ENCODE measurements at regions of chr5 and their contacts with region 1.

Region 1: DNA sequence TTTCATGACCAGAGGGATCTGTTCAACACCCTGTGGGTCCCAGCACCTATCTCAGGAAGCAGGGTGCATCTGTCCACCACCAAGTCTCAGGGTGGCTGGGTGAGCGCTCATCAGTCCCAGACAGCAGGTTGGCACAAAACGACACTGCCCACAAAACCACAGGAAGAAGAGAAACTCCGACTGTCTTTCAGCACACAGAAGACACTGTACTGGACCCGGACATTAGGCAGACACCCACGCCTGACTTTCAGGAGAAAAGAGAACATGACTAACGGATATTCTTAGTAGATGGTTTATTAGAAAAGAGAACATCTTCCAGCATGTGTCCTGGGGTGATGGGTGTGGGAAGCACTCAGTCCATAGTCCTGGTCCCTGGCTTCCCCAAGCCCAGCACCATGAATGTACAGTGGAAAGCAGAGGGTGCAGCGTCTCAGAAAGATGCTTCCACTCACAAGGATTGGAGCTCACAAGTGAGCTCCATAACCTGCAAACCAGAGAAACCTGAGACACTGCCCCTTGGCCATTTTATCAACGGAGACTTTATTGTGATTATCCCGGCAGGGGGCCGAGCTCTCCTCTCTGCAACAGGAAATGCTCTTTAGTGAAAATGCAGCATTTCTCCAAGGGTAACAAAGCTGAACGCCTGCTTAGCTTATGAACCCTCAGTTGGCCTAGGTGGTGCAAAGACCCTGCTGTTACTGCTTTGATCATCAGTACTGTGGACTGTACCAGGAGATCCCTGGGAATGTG is 35.8 kb upstream of the LCP2 start:
- DNase-seq: peak; percentile 46
- ATAC-seq: peak; percentile 27
- H3K4me3 Mint-ChIP-seq: no peak overlapping the region
- H3K27ac Mint-ChIP-seq: no peak overlapping the region
- H3K4me1 Mint-ChIP-seq: peaks cover 56% of the 10 kb centered on the region
- H3K27me3 Mint-ChIP-seq: no peaks in the 10 kb centered on the region

Region 2: DNA sequence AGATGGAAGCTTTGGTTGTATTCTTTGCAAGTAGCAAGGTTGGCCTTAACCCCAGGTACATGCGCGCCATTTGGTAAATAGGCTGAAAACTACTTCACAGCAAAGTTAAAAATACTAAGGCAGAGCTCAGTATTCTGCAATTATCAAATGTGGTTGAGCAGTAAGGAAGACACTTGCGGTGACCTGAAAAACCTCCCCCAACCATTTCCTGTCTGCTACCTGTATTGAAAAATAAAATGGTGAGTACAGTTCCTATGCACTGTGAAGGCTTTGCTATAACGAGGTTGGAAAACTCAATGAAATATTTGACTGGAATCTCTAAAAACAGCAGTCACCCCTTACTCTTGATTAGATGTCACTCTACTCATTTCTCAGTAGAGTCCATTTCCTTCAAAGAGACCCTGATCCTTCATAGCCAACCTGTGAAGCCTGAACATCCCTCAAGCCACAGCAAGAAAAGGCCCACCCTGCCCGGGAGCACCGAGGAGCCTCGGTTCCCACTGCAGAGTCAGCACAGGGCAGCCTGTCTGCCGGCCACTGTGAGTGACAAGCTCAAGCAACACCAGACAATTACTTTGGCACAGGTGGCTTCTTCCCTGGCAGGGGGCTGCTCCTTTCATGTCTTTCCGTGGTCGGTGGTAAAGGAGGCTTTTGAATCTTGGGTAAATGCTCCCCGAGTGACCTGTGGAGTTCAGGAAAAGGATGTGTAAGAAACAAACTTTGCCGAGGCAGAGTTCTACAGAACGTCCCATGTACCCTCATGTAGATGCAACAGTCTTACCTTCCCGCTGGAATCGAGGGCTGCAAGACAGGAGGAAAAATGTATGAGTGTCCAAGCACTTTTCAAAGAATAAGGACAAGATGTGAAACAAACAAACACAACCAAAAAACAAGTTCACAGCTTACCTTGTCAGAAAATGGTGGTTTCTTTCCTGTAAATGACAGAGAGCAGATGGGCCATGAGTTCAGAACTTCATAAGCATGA is 71.0 kb before region 1 on chr5:
- POLR2A ChIA-PET with region 1: interaction called, 34 read pairs
- DNase-seq: peak; percentile 66
- ATAC-seq: peak; percentile 70
- H3K4me3 Mint-ChIP-seq: peak overlapping the region; percentile 78
- H3K27ac Mint-ChIP-seq: peak overlapping the region; percentile 88
- H3K4me1 Mint-ChIP-seq: peaks cover 87% of the 10 kb centered on the region
- H3K27me3 Mint-ChIP-seq: no peaks in the 10 kb centered on the region

Region 3: GRCh38 chr5:170278611-170279452 is 54.5 kb before region 1 on chr5:
- POLR2A ChIA-PET with region 1: interaction called, 32 read pairs
- DNase-seq: peak; percentile 87
- ATAC-seq: peak; percentile 76
- H3K4me3 Mint-ChIP-seq: peak overlapping the region; percentile 69
- H3K27ac Mint-ChIP-seq: peak overlapping the region; percentile 88
- H3K4me1 Mint-ChIP-seq: peaks cover 86% of the 10 kb centered on the region
- H3K27me3 Mint-ChIP-seq: no peaks in the 10 kb centered on the region

Region 4: GRCh38 chr5:170293273-170293672 is 40.1 kb before region 1 on chr5:
- POLR2A ChIA-PET with region 1: interaction called, 371 read pairs
- DNase-seq: peak; percentile 88
- ATAC-seq: peak; percentile 68
- H3K4me3 Mint-ChIP-seq: peak overlapping the region; percentile 99
- H3K27ac Mint-ChIP-seq: peak overlapping the region; percentile 97
- H3K4me1 Mint-ChIP-seq: peaks cover 60% of the 10 kb centered on the region
- H3K27me3 Mint-ChIP-seq: no peaks in the 10 kb centered on the region

Region 5: DNA sequence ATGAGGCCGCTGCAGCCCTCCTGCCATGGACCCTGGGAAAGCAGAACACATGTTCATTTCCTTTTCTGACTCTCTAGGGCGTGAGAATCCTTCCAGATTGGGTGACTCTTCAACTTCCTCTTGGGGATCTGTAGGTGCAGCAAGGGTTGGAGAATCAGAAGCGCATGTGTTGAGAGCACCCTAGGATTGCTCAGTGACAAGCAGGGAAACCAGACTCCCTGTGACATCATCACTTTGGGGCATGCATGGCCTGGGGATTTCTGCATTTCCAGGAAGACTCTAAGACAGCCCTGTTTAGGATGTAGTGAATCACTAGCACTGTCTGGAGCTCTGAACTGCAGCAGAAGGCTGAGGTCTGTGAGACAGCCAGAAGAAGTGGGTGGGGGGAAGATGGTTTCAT is 20.7 kb before region 1 on chr5:
- POLR2A ChIA-PET with region 1: interaction called, 21 read pairs
- DNase-seq: no peak
- ATAC-seq: peak; percentile 69
- H3K4me3 Mint-ChIP-seq: peak overlapping the region; percentile 51
- H3K27ac Mint-ChIP-seq: peak overlapping the region; percentile 78
- H3K4me1 Mint-ChIP-seq: peaks cover 38% of the 10 kb centered on the region
- H3K27me3 Mint-ChIP-seq: no peaks in the 10 kb centered on the region

Region 6: DNA sequence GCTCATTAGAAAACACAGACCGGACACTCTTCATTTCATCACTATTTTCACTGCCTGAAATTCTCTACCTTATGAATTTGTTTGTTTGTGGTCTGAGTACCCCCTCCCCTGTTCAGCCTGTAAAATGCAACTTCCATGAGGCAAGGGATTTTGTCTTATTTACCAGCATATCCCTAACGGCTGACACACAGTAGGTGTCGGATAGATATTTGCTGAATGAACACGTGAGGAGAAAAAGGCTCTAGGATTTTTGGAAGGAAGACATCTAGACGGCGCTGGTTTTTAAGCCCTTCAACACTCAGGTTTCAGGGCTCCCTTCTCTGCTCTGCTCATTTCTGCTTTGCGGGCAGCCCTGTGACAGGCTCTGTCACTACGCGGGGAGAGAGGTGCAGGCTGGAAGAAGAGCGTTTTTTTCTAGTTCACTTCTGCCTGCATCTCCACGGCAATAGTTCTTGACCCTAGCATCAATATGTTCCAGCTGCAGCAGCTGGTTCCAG is 14.8 kb after region 1 on chr5:
- POLR2A ChIA-PET with region 1: no interaction called
- DNase-seq: no peak
- ATAC-seq: no peak
- H3K4me3 Mint-ChIP-seq: no peak overlapping the region
- H3K27ac Mint-ChIP-seq: no peak overlapping the region
- H3K4me1 Mint-ChIP-seq: peaks cover 18% of the 10 kb centered on the region
- H3K27me3 Mint-ChIP-seq: peaks cover 24% of the 10 kb centered on the region